ENCODE measurements at regions of chr1 and their contacts with region 1.

Region 1: GRCh38 chr1:53485478-53486394 is 26.5 kb downstream of the DMRTB1 start:
- DNase-seq: peak; percentile 91
- ATAC-seq: peak; percentile 94

Region 2: GRCh38 chr1:53754484-53755312 is 269.0 kb after region 1 on chr1:
- intact Hi-C with region 1: loop called (anchors 10 kb)
- DNase-seq: no peak
- ATAC-seq: peak; percentile 47

Measured in left ventricle myocardium superior (tissue), 1 donor.